ENCODE measurements at regions of chr1 and their contacts with region 1.

Region 1: DNA sequence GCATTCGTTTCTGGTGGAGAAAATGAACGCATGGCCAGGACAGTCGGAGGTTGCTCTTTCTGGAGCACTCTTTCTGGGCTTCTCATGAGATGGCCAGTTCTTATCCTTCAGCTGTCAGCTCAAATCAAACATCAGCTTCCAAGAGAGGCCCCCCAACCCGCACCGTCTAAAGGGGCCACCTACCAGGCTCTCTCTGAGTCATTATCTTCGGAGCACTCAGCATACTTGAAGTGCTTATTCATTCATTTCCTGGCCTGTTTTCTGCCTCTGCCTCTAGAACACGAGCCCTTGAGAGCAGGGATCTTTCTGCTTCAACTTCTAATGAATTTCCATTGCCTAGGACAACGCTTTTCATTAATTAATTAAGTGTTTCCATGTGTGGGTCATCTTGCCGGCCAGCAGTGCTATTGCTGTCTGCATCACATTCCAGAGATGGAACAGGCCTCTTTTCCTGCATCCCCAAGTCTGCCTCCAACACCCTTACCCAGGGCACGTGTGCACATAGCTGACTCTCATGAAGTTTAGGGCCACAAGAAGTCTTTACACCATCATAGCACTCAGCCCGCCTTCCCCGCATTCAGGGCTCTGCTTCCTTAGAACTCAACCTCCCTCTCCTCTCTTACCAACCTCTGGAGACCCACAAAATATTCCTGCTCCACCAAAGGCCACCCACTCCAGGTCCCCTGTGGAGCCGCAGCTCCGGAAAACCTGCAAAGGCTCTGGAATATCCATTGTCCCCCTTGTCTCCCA is 52.1 kb upstream of the LAPTM5 start:
- H3K4me3 Mint-ChIP-seq: no peak overlapping the region
- H3K27ac Mint-ChIP-seq: no peak overlapping the region
- H3K4me1 Mint-ChIP-seq: peaks cover 28% of the 10 kb centered on the region
- H3K27me3 Mint-ChIP-seq: peaks cover 66% of the 10 kb centered on the region

Region 2: DNA sequence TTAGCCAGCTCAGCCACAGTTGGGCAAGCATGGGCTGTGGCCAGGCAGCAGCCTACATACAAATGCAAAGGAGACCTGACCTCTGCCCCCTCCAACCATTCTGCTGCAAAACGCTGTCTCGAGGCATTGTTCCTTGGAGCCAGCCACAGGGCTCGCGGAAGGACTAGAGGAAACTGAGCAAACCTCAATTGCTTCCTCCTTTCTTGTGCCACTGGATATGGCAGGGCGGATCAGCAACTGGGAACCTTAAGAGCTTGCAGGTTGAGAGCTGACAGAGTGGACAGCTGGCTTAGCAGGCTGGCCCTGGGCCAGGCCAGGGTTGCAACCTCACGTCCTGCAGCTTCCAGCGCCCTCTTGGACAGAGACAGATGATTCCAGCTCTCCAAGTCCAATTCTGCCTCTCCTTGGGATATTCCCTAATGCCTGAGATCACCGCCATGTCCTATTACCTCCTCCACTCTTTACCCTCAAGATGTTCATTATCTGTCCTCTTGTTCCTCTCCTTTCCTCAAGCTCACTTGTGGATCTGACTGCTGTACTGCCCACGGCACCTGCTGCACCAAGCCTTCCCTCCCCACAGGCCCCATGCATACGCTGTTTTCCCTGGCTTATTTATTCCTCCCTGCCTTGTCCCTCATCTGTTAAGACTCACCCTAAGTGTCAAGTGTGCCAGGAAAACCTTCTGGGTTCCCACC is 31.4 kb after region 1 on chr1:
- intact Hi-C with region 1: loop called (anchors 5 kb)
- H3K4me3 Mint-ChIP-seq: no peak overlapping the region
- H3K27ac Mint-ChIP-seq: no peak overlapping the region
- H3K4me1 Mint-ChIP-seq: peaks cover 27% of the 10 kb centered on the region
- H3K27me3 Mint-ChIP-seq: peaks cover 97% of the 10 kb centered on the region